ENCODE measurements at regions of chr5 and their contacts with region 1.

Region 1: DNA sequence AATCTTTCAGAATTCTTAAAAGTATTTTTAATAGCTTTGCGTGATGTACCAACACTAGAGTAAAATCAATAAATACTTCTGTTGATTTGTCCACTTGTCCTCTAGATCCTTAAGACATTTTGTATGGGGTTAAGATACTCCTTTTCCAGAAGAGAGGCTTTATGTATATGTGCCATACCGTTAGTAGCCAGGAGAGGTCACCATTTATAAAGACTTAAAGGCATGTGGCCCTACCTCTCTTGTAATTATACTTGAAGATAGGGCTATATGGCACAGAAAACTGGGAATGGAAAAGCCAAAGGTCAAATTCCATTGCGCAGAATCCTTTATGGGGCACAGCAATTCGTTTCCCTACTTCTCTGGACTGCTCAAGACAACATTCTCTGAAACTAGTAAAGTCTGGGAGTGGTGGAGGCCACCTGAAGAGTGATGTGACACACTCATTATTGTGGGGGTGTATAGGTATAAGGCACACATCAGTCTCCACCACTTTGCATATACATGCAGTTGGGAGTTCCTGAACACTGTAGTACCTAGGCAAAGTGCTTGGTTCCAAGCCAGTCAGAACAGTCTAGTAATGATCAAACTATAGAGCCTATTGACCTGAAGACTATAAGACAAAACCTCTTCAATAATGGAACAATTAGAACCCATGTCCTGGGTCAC is 140.1 kb upstream of the FBXL17 start:
- DNase-seq: peak; percentile 53
- ATAC-seq: peak; percentile 91
- H3K4me3 ChIP-seq: no peak overlapping the region
- H3K27ac ChIP-seq: no peak overlapping the region
- H3K4me1 ChIP-seq: no peaks in the 10 kb centered on the region
- H3K27me3 ChIP-seq: no peaks in the 10 kb centered on the region
- CTCF ChIP-seq: peak; percentile 69
- EP300 ChIP-seq: no peak
- POLR2A ChIP-seq: no peak
- RAD21 ChIP-seq: no peak

Region 2: DNA sequence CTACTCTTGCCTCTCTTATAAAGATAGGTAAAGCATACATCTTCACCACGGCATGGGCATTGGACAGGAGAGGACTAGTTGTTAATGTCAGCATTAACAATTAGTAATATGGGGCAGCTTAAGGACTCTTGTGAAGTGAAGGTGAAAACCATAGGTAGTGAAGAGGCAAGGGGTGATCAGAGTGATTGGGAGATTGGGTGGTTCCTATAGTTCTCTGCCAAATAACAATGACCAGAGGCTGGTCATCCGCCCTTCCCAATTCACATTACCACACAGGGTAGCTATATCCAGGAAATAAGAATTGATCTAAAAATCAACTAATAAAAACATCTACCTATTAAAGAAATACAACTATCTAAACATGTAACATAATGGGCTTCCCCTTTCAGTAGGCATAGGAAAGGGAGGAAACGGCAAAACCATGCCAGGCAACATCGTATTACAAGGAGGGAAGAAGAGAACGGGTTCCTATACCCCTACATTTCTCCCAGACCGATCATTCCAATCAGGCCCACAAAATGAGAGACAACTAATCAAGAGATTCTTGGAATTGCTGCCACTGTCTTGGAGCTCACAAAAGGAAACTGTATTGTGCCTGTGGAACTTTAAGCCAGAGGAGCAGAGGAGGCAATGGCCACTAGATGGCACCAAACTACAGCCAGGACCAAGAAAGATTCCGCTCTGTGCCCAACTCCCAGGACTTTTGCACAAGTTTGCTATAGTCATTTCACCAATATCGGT is 261.7 kb before region 1 on chr5:
- CTCF ChIA-PET with region 1: no interaction called
- POLR2A ChIA-PET with region 1: no interaction called
- in situ Hi-C with region 1: no loop called
- intact Hi-C with region 1: loop called (anchors 1 kb)
- DNase-seq: peak; percentile 58
- ATAC-seq: peak; percentile 96
- H3K4me3 ChIP-seq: no peak overlapping the region
- H3K27ac ChIP-seq: no peak overlapping the region
- H3K4me1 ChIP-seq: no peaks in the 10 kb centered on the region
- H3K27me3 ChIP-seq: no peaks in the 10 kb centered on the region
- CTCF ChIP-seq: peak; percentile 91
- EP300 ChIP-seq: no peak
- POLR2A ChIP-seq: no peak
- RAD21 ChIP-seq: peak; percentile 73

Region 3: DNA sequence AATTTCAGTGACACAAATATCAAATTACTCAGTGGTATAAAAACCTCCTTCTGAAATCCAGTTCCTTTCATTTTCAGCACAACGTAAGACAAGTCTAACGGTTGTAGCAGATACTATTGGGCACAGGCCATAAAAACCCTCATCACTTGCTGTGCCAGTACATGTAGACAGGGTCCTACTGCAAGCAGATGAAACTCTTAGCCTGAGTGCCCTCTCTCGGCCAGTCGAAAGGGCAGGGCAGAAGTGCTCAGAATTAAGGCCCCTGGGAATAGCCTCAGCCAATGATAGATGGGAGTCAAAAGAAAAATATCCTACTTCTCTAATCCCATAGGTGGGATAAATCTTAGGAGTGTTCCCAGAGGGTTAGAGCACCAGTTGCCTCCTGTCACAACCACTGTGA is 57.3 kb after region 1 on chr5:
- CTCF ChIA-PET with region 1: no interaction called
- POLR2A ChIA-PET with region 1: no interaction called
- in situ Hi-C with region 1: no loop called
- intact Hi-C with region 1: loop called (anchors 1 kb)
- DNase-seq: no peak
- ATAC-seq: peak; percentile 41; the same call in 1 of the 3 replicates
- H3K4me3 ChIP-seq: no peak overlapping the region
- H3K27ac ChIP-seq: no peak overlapping the region
- H3K4me1 ChIP-seq: no peaks in the 10 kb centered on the region
- H3K27me3 ChIP-seq: no peaks in the 10 kb centered on the region
- CTCF ChIP-seq: peak; percentile 19; the same call in 1 of the 2 replicates
- EP300 ChIP-seq: no peak
- POLR2A ChIP-seq: no peak
- RAD21 ChIP-seq: no peak

Region 4: GRCh38 chr5:108642167-108642906 is 120.4 kb after region 1 on chr5:
- CTCF ChIA-PET with region 1: no interaction called
- POLR2A ChIA-PET with region 1: no interaction called
- in situ Hi-C with region 1: no loop called
- intact Hi-C with region 1: loop called (anchors 5 kb)
- DNase-seq: peak; percentile 53
- ATAC-seq: peak; percentile 100
- H3K4me3 ChIP-seq: 0 out of 6 replicates have a peak overlapping the region, but pooled peaks of 1 of the 3 experiments have one; percentile 35
- H3K27ac ChIP-seq: no peak overlapping the region
- H3K4me1 ChIP-seq: peaks cover 5% of the 10 kb centered on the region; the same call in 1 of the 2 replicates
- H3K27me3 ChIP-seq: 0 out of 5 replicates have a peak, but pooled peaks cover 0 to 4% of the 10 kb centered on the region in 2 experiments
- CTCF ChIP-seq: peak; percentile 88
- EP300 ChIP-seq: no peak
- POLR2A ChIP-seq: no peak
- RAD21 ChIP-seq: peak; percentile 61; the same call in 1 of the 2 replicates